ENCODE measurements at regions of chr9 and their contacts with region 1.

Region 1: DNA sequence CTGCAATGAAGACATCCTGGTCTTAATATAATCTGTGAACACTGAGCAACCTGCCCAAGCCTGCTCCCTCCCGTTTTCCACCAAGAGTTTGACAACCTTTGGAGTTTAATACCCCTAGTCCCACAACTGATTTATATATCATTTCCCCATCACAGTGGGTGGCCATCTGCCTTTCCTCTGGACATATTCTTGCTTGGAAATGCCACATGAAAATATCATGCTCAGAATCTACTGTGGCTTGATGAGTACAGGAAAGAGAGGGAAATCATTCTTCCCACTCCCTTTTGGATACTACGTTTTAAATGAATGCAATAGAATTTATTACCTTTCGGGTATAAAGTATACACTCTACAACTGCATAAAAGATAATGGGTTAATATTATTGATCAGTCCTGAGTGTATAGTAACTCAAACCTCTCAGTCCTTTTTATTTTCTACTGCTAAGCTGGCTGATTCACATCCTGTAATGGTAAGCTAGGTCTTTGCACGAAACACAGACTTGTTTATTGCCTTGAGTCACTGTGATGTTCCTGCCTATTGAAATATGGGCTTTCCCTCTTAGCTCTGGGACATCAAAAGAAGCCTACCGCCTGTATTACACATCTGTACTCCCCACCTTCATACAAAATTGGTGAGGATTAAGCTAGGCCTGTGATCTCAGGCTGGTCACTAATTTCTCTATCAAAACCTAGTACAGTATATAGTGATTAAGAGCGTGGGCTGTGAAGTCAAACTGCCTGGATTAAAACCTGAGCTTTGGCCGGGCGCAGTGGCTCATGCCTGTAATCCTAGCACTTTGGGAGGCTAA is 67.5 kb upstream of the NR5A1 start:
- DNase-seq: no peak
- H3K4me3 ChIP-seq: no peak overlapping the region
- H3K27ac ChIP-seq: no peak overlapping the region
- H3K4me1 ChIP-seq: peaks cover 0 to 17% (median 5%) of the 10 kb centered on the region in 4 experiments; a peak in 4 of 7 replicates
- H3K27me3 ChIP-seq: no peaks in the 10 kb centered on the region
- CTCF ChIP-seq: no peak
- EP300 ChIP-seq: no peak
- POLR2A ChIP-seq: no peak
- RAD21 ChIP-seq: no peak

Region 2: DNA sequence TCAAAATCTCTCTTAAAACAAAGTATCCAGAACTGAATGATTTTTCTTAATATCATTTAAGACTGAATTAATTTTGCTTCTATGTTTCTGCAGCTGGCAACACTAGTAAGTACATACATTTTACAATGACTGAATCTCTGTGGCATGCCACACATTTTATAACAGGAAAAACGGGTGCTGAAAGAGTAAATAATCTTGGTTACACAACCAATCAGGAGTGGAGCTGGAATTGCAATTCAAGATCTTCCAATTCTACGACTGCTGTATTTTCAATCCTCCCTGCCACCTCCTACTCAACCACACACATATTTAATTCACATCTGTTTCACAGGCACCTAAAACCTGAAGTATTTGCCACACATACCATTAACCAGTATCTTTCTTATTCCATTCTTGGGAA is 14.9 kb before region 1 on chr9:
- CTCF ChIA-PET with region 1: interaction called, 10 read pairs
- POLR2A ChIA-PET with region 1: interaction called, 4 read pairs
- DNase-seq: no peak
- H3K4me3 ChIP-seq: no peak overlapping the region
- H3K27ac ChIP-seq: no peak overlapping the region
- H3K4me1 ChIP-seq: peaks cover 0 to 4% (median 1%) of the 10 kb centered on the region in 4 experiments; a peak in 4 of 7 replicates
- H3K27me3 ChIP-seq: no peaks in the 10 kb centered on the region
- CTCF ChIP-seq: no peak
- EP300 ChIP-seq: no peak
- POLR2A ChIP-seq: no peak
- RAD21 ChIP-seq: no peak

Region 3: GRCh38 chr9:124635285-124635684 is 60.5 kb after region 1 on chr9:
- CTCF ChIA-PET with region 1: no interaction called
- POLR2A ChIA-PET with region 1: no interaction called
- DNase-seq: no peak
- H3K4me3 ChIP-seq: no peak overlapping the region
- H3K27ac ChIP-seq: no peak overlapping the region
- H3K4me1 ChIP-seq: peaks cover 0 to 3% (median 0%) of the 10 kb centered on the region in 4 experiments; a peak in 2 of 7 replicates
- H3K27me3 ChIP-seq: no peaks in the 10 kb centered on the region
- CTCF ChIP-seq: no peak
- EP300 ChIP-seq: no peak
- POLR2A ChIP-seq: no peak
- RAD21 ChIP-seq: no peak

Measured in H1 (cell line).